ENCODE measurements at regions of chr5 and their contacts with region 1.

Region 1: DNA sequence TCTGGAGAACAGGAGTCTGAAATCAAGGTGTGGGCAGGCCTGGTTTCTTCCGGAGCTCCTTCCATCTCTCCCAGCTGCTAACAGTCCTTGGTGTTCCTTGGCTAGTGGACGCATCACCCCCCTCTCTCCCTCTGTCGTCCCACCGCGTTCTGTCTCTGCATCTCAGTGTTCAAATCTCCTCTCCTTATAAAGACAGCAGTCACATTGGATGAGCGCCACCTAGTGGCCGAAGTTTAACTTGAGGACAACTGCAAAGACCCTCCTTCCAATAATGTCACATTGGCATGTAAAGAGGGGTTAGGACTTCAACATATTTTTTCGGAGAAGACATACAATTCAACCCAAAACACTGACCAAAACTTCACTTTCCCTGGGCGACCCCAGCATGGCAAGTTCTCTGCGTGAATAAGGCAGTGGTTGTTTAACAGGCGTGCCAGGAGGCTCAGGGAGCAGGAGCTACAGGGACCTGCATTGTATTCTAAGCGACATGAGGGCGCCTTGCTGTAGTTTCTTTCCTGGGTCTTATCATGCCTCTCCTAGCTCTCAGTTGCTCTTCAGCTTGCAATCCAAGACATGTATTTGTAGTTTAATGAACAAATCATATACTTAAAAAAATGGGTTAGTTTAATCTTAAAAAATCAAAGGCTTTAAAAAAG is 27.9 kb upstream of the BASP1 start:
- DNase-seq: peak; percentile 73
- H3K4me3 ChIP-seq: no peak overlapping the region
- CTCF ChIP-seq: peak; percentile 77

Region 2: GRCh38 chr5:16695779-16696178 is 493.7 kb before region 1 on chr5:
- in situ Hi-C with region 1: loop called (anchors 5 kb)
- DNase-seq: no peak
- H3K4me3 ChIP-seq: no peak overlapping the region
- CTCF ChIP-seq: no peak

Region 3: DNA sequence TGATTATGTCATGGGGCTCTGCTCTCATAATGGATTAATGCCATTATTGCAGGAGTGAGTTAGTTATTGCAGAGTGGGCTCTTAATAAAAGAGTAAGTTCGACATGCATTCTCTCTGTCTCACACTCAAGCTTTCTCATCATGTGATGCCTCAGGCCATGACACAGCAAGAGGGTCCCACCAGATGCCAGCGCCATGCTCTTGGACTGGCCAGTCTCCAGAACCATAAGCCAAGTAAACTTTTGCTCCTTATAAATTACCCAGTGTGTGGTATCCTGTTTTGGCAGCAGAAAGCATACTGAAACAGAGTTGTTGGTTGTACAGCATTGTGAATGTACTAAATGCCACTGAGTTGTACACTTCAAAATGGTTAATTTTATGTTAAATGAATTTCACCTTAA is 391.6 kb before region 1 on chr5:
- in situ Hi-C with region 1: loop called (anchors 5 kb)
- DNase-seq: peak; percentile 31
- H3K4me3 ChIP-seq: no peak overlapping the region
- CTCF ChIP-seq: no peak

Measured in astrocyte of the cerebellum (primary cell).